Activated T-helper 2 cell treated with anti-CD3 and anti-CD28 coated beads, Interferon-gamma antibody, Interleukin-2, Interleukin-4, amounts not matched to agents 10 μg/mL and 5 μg/mL and 100 μg/mL, durations not matched to agents 14 hours and 24 hours and 36 hours (primary cell): ENCODE measurements at regions of chr10 and their contacts with region 1.

Region 1: GRCh38 chr10:8130973-8131911 is 76.8 kb downstream of the GATA3 start:
- DNase-seq: peak; percentile 55
- H3K4me3 Mint-ChIP-seq: peak overlapping the region; percentile 47
- H3K27ac Mint-ChIP-seq: peak overlapping the region; percentile 80
- H3K4me1 Mint-ChIP-seq: peaks cover 62% of the 10 kb centered on the region
- H3K27me3 Mint-ChIP-seq: no peaks in the 10 kb centered on the region

Region 2: DNA sequence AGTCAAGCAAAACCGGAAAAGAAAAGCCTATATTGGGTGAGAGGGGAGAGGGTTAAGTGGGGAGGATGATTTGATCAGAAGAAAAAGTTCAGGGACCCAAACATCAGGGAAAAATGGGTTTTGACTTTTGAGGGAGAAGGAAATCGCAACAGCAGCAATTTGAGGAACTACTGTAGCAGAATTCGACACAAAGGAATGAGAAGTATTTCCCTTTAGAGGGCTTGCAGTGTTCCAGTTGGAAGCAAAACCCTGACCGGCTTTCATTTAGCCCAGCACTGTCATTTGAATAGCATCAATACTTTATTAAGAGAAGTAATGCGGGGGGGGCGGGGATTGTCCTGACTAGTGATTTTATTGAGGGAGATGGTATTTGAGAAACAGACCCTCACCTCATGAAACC is 114.0 kb before region 1 on chr10:
- intact Hi-C with region 1: no loop called
- DNase-seq: no peak
- H3K4me3 Mint-ChIP-seq: no peak overlapping the region
- H3K27ac Mint-ChIP-seq: no peak overlapping the region
- H3K4me1 Mint-ChIP-seq: no peaks in the 10 kb centered on the region
- H3K27me3 Mint-ChIP-seq: peaks cover 1% of the 10 kb centered on the region

Region 3: DNA sequence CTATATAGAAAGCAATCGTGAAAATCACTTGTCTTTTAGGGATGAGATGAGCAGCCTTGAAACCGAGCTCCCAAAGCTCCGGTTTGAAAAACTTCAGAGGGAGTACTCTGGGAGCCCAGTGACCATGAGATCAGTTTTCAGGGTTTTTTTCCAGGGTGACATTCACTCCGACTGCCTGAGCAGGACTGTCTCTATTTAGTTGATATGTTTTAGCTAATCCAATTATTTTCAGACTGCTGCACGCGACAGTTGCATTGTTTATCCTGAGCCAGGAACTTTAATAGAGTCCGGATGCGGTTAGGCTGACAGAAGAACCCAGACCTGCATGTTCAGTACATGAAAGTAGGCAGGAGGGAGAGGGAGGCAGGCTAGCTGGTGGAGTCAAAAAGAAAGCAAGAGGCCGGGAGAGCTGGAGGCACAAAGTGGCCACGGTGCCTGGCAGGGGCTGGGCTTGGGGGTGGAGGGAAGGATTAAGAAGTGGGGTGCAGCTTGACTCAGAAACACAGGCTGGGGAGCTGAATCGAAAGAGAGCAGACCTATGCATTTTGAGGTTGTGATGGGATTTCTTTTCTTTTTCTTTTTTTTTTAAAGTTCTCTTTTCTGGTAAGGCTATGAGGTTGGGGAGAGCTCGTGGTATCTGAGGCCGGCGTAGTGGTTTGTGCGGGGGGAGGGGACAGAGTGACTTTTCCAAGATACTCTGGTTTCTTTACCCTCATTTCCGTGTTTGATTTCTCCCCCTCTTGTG is 71.1 kb before region 1 on chr10:
- intact Hi-C with region 1: loop called (anchors 1 kb)
- DNase-seq: peak; percentile 81
- H3K4me3 Mint-ChIP-seq: peak overlapping the region; percentile 92
- H3K27ac Mint-ChIP-seq: peak overlapping the region; percentile 94
- H3K4me1 Mint-ChIP-seq: peaks cover 50% of the 10 kb centered on the region
- H3K27me3 Mint-ChIP-seq: no peaks in the 10 kb centered on the region

Region 4: GRCh38 chr10:8183241-8183704 is 52.0 kb after region 1 on chr10:
- intact Hi-C with region 1: loop called (anchors 5 kb)
- DNase-seq: no peak
- H3K4me3 Mint-ChIP-seq: no peak overlapping the region
- H3K27ac Mint-ChIP-seq: no peak overlapping the region
- H3K4me1 Mint-ChIP-seq: peaks cover 15% of the 10 kb centered on the region
- H3K27me3 Mint-ChIP-seq: no peaks in the 10 kb centered on the region

Region 5: GRCh38 chr10:8325024-8325980 is 194.1 kb after region 1 on chr10:
- intact Hi-C with region 1: loop called (anchors 1 kb)
- DNase-seq: peak; percentile 42
- H3K4me3 Mint-ChIP-seq: peak overlapping the region; percentile 40
- H3K27ac Mint-ChIP-seq: peak overlapping the region; percentile 93
- H3K4me1 Mint-ChIP-seq: peaks cover 78% of the 10 kb centered on the region
- H3K27me3 Mint-ChIP-seq: no peaks in the 10 kb centered on the region

Region 6: GRCh38 chr10:8577686-8578085 is 446.4 kb after region 1 on chr10:
- intact Hi-C with region 1: loop called (anchors 5 kb)
- DNase-seq: no peak
- H3K4me3 Mint-ChIP-seq: no peak overlapping the region
- H3K27ac Mint-ChIP-seq: peak overlapping the region; percentile 89
- H3K4me1 Mint-ChIP-seq: peaks cover 69% of the 10 kb centered on the region
- H3K27me3 Mint-ChIP-seq: no peaks in the 10 kb centered on the region

Region 7: DNA sequence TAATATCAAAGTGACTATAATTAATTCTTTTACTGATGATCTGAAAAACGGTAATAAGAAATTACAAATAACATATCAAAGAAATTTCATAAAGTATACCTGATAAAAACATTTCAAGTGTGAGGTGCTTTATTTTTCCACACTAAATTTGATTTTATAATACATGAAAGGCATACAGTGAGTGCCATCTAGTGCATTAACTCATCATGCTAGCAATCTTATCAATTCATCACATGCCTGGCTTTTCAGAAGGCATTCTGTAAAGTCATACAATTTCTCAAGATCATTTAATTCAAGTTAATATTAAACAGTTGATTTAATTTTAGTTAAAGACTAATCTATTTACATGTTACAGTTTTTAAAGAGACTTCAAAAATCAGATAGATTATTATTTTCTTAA is 944.2 kb after region 1 on chr10:
- intact Hi-C with region 1: loop called (anchors 5 kb)
- DNase-seq: no peak
- H3K4me3 Mint-ChIP-seq: no peak overlapping the region
- H3K27ac Mint-ChIP-seq: no peak overlapping the region
- H3K4me1 Mint-ChIP-seq: peaks cover 38% of the 10 kb centered on the region
- H3K27me3 Mint-ChIP-seq: no peaks in the 10 kb centered on the region